ENCODE measurements at regions of chr2 and their contacts with region 1.

Region 1: DNA sequence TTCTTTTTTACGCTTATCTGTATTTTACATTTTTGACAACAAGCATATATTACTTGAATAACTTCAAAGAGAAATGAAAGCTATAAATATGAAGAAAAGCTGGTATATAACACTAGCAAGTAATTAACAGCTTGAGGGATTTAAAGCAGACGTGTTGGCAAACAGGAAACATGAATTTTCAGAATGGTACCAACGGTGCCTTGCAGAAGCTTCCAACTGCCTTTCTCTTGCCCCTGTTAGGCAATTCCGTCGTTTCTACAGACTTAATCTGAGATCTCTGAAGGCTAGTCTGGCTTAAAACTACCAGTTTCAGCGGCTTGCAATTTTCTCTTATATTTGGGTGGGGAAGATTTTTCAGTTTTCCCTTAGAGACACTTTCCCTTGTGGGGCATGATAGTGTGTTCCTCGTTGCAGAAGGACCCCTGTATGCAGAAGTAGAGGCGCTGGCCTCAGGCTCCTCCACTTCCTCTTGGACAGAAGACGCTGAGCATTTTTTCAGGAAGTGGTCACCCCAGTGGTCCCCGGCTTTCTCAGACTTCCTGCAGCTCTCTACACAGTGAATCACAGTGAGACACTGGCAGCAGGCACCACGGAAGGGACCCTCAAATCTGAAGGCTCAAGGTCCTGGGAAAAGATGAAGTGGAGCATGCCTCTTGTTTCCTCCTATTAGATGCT is 56.2 kb upstream of the SLC16A14 start:
- DNase-seq: peak; percentile 85
- ATAC-seq: peak; percentile 34

Region 2: DNA sequence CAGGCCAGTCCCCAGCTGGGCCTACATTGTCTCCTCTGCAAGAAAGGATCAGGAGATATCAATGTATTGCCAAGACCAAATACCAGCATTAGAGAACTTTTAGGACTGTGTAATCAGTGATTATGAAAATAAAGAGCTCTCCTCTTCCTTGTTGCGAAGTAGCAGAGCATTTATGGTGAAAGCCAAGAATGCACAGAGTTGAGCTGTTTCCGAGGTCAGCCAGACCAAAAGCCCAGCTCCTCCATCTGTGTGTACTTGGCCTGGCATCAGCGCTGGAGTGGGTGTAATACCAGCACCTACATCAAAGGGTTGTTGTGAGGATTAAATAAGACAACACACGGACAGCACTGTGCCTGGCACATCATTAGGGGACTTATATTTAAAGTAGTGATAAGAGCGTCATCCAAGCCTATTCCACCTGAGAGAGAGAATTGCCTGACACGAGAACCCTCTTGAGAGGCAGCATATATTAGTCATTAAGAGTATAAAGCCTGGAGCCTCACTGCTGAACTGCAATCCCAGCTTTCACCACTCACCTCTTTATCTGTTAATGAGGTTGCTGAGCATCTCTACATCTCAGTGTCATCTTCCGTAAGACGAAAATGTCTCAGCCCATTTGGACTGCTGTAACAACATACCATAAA is 48.8 kb before region 1 on chr2:
- intact Hi-C with region 1: loop called (anchors 5 kb)
- DNase-seq: no peak
- ATAC-seq: no peak

Region 3: DNA sequence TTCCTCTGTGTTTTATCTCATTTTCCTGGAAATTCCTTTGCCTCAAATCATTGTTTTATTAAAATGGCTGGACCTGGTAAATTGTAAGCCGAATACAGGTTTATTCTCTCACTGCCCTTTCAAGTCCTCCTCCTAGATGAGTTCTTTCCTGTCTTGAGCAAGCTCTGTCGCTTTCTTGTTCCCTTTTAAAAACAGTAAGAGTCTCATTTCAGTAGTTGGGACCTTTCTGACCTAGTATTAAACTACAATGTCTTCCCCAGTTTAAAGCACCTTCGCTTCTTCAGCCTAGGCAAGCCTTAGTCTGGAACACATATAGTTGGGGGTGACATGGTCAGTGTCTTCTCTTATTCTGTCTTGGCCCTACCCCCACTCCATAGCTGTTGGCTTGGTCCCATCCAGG is 161.2 kb after region 1 on chr2:
- intact Hi-C with region 1: no loop called
- DNase-seq: no peak
- ATAC-seq: no peak